ENCODE measurements at regions of chr6 and their contacts with region 1.

Region 1: GRCh38 chr6:136037876-136038460 is 186.5 kb downstream of the PDE7B start:
- DNase-seq: peak in 1 of 2 donors; percentile 55
- ATAC-seq: peak in 2 of 4 donors; percentile 27 to 31
- H3K4me3 ChIP-seq: peak overlapping the region; percentile 59
- H3K27ac ChIP-seq: peak overlapping the region; percentile 60
- H3K4me1 ChIP-seq: peaks cover 3% of the 10 kb centered on the region
- H3K27me3 ChIP-seq: no peaks in the 10 kb centered on the region
- CTCF ChIP-seq: no peak

Region 2: GRCh38 chr6:136079701-136080565 is 42.0 kb after region 1 on chr6:
- intact Hi-C with region 1: loop called in 1 of 2 experiments (anchors 1 kb)
- DNase-seq: no peak
- ATAC-seq: no peak
- H3K4me3 ChIP-seq: no peak overlapping the region
- H3K27ac ChIP-seq: no peak overlapping the region
- H3K4me1 ChIP-seq: peaks cover 12% of the 10 kb centered on the region
- H3K27me3 ChIP-seq: no peaks in the 10 kb centered on the region
- CTCF ChIP-seq: no peak

Region 3: GRCh38 chr6:136103763-136104311 is 65.9 kb after region 1 on chr6:
- intact Hi-C with region 1: loop called in 1 of 2 experiments (anchors 5 kb)
- DNase-seq: peak; percentile 23 to 69
- ATAC-seq: peak; percentile 55 to 96 (median 87)
- H3K4me3 ChIP-seq: peak overlapping the region; percentile 7
- H3K27ac ChIP-seq: peak overlapping the region; percentile 63
- H3K4me1 ChIP-seq: peaks cover 17% of the 10 kb centered on the region
- H3K27me3 ChIP-seq: no peaks in the 10 kb centered on the region
- CTCF ChIP-seq: no peak